GM12878 (cell line): ENCODE measurements at regions of chr4 and their contacts with region 1.

Region 1: GRCh38 chr4:3355266-3355748 is 62.5 kb downstream of the RGS12 start:
- DNase-seq: peak; percentile 80
- ATAC-seq: peak; percentile 99
- H3K4me3 ChIP-seq: no peak overlapping the region
- H3K27ac ChIP-seq: peak overlapping the region; percentile 72
- H3K4me1 ChIP-seq: peaks cover 8% of the 10 kb centered on the region; the same call in 1 of the 2 replicates
- H3K27me3 ChIP-seq: no peaks in the 10 kb centered on the region
- CTCF ChIP-seq: no peak
- EP300 ChIP-seq: peak in 1 of 2 experiments; percentile 29; a peak in 2 of 4 replicates
- POLR2A ChIP-seq: no peak
- RAD21 ChIP-seq: no peak

Region 2: GRCh38 chr4:2811830-2812611 is 543.3 kb before region 1 on chr4:
- CTCF ChIA-PET with region 1: no interaction called
- POLR2A ChIA-PET with region 1: no interaction called
- RAD21 ChIA-PET with region 1: no interaction called
- SMC1A ChIA-PET with region 1: no interaction called
- in situ Hi-C with region 1: no loop called
- intact Hi-C with region 1: no loop called
- DNase-seq: peak; percentile 40
- ATAC-seq: peak; percentile 82
- H3K4me3 ChIP-seq: peak overlapping the region; percentile 97
- H3K27ac ChIP-seq: peak overlapping the region; percentile 90
- H3K4me1 ChIP-seq: peaks cover 41% of the 10 kb centered on the region
- H3K27me3 ChIP-seq: no peaks in the 10 kb centered on the region
- CTCF ChIP-seq: no peak
- EP300 ChIP-seq: 0 out of 4 replicates have a peak, but pooled peaks of 1 of the 2 experiments have one; percentile 17
- POLR2A ChIP-seq: peak; percentile 88
- RAD21 ChIP-seq: no peak

Region 3: DNA sequence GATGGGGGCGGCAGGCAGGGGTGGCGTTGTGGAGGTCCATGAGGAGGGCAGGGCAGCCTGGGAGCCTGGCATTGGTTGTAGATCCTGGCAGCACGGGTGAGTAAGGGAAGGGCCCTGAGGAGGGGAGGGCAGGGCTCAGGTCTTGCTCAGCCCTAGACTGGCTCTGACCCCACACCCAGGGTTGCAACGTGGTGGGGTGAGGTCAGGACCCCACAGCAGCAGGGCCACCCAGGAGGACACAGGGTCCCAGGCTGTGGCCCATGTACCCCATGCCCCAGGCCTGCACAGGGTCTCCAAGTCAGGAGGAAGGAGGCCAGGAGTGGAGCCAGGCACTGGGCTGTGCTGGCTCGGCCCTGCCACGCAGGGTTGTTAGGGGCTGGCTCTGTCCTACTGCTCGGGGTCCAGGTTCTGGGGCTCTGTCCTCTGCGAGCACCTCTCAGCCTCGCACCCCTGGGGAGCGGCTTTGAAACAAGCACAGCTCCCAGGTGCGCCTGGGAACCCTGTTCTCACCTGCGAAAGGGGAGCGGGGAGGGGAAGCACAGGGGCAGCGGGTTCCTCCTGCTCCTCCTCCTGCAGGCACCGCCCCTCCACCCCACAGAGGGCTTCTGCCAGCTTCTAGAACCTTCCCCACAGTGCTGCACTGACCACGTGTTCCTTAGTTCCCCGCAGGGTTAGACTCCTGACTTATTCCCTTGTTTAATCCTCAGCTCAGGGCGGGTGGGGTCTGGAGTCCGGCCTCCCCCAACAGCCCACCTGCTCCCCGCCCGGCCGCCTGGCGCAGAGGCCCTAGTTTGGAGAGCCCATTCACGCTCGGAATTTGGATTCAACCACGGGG is 86.0 kb before region 1 on chr4:
- CTCF ChIA-PET with region 1: no interaction called
- POLR2A ChIA-PET with region 1: no interaction called
- RAD21 ChIA-PET with region 1: no interaction called
- SMC1A ChIA-PET with region 1: no interaction called
- in situ Hi-C with region 1: no loop called
- intact Hi-C with region 1: no loop called
- DNase-seq: no peak
- ATAC-seq: peak; percentile 23; the same call in 2 of the 3 replicates
- H3K4me3 ChIP-seq: no peak overlapping the region
- H3K27ac ChIP-seq: no peak overlapping the region
- H3K4me1 ChIP-seq: no peaks in the 10 kb centered on the region
- H3K27me3 ChIP-seq: no peaks in the 10 kb centered on the region
- CTCF ChIP-seq: no peak
- EP300 ChIP-seq: no peak
- POLR2A ChIP-seq: no peak
- RAD21 ChIP-seq: no peak

Region 4: GRCh38 chr4:3388471-3389232 is 33.3 kb after region 1 on chr4:
- CTCF ChIA-PET with region 1: interaction called, 4 read pairs
- POLR2A ChIA-PET with region 1: interaction called, 10 read pairs
- RAD21 ChIA-PET with region 1: interaction called, 22 read pairs
- SMC1A ChIA-PET with region 1: interaction called, 11 read pairs
- in situ Hi-C with region 1: no loop called
- intact Hi-C with region 1: loop called (anchors 1 kb)
- DNase-seq: peak; percentile 77
- ATAC-seq: peak; percentile 88
- H3K4me3 ChIP-seq: peak overlapping the region; percentile 77
- H3K27ac ChIP-seq: peak overlapping the region; percentile 91
- H3K4me1 ChIP-seq: peaks cover 21% of the 10 kb centered on the region
- H3K27me3 ChIP-seq: no peaks in the 10 kb centered on the region
- CTCF ChIP-seq: no peak
- EP300 ChIP-seq: peak in 1 of 2 experiments; percentile 59; a peak in 2 of 4 replicates
- POLR2A ChIP-seq: no peak
- RAD21 ChIP-seq: no peak